Naive thymus-derived CD4-positive, alpha-beta T cell (primary cell): ENCODE measurements at regions of chr20 and their contacts with region 1.

Region 1: GRCh38 chr20:36835453-36836198 is 40.3 kb upstream of the TLDC2 start:
- DNase-seq: peak; percentile 56 to 85 (median 72)
- ATAC-seq: peak; percentile 99
- H3K4me3 ChIP-seq: peak overlapping the region; percentile 63
- H3K4me3 Mint-ChIP-seq: peak overlapping the region; percentile 71 to 92 (median 82)
- H3K27ac ChIP-seq: peak overlapping the region; percentile 54
- H3K27ac Mint-ChIP-seq: peak overlapping the region in 4 of 9 donors; percentile 75 to 92 (median 82)
- H3K4me1 ChIP-seq: peaks cover 5 to 9% of the 10 kb centered on the region in 2 donors
- H3K4me1 Mint-ChIP-seq: peaks cover 5 to 32% (median 10%) of the 10 kb centered on the region in 7 donors
- H3K27me3 ChIP-seq: no peaks in the 10 kb centered on the region
- H3K27me3 Mint-ChIP-seq: no peaks in the 10 kb centered on the region

Region 2: DNA sequence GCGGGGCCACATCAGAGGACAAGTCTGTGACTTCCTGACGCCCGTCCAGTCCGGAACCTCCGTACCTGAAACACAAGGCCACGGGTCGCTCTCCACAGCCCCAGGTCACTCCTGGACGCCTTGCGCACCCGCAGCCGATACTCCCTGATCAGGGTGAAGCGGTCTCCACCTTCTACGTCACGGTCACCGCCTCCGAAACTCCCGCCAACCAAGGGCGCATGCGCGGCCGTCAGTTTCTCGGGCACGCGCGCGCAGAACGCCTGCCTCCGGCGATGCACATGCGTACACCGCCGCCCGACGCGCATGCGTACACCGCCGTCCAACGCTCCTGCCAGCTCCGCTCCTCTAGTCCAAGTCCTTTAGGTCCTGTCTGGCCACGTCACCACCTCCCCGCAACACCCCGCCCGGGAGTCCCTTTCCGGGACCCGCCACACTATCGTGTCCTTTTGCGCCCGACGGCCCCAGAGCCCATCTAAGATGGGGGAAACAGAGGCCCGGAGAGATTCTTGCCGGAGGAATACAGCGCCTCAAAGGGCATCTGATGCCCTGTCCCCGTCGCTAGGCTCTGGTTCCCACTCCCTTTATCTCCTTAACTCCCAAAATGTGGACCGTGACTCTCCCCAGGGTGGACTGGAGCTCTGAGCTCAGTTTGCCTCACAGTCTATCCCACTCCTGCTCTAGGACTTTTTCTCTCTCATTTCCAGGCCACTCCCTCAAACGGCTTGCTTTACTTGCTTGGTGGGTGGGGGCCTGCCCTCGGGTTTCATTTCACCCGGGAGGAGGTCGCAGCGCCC is 61.8 kb before region 1 on chr20 and contains the start of gene DSN1:
- CTCF ChIA-PET with region 1: no interaction called
- POLR2A ChIA-PET with region 1: no interaction called
- intact Hi-C with region 1: loop called (anchors 2 kb)
- DNase-seq: peak; percentile 94 to 100 (median 97)
- ATAC-seq: peak; percentile 90
- H3K4me3 ChIP-seq: peak within 1 kb of the TSS; percentile 96
- H3K4me3 Mint-ChIP-seq: peak within 1 kb of the TSS; percentile 83 to 98 (median 95)
- H3K27ac ChIP-seq: peak within 1 kb of the TSS; percentile 93
- H3K27ac Mint-ChIP-seq: peak within 1 kb of the TSS; percentile 90 to 100 (median 97)
- H3K4me1 ChIP-seq: peaks cover 8 to 13% of the 10 kb centered on the region in 2 donors
- H3K4me1 Mint-ChIP-seq: peaks cover 8 to 36% (median 27%) of the 10 kb centered on the region in 7 donors
- H3K27me3 ChIP-seq: no peaks in the 10 kb centered on the region
- H3K27me3 Mint-ChIP-seq: peaks cover 0 to 2% (median 0%) of the 10 kb centered on the region in 5 donors
- total RNA-seq, gene DSN1: 9.2 to 27.5 (median 13.4) TPM

Region 3: DNA sequence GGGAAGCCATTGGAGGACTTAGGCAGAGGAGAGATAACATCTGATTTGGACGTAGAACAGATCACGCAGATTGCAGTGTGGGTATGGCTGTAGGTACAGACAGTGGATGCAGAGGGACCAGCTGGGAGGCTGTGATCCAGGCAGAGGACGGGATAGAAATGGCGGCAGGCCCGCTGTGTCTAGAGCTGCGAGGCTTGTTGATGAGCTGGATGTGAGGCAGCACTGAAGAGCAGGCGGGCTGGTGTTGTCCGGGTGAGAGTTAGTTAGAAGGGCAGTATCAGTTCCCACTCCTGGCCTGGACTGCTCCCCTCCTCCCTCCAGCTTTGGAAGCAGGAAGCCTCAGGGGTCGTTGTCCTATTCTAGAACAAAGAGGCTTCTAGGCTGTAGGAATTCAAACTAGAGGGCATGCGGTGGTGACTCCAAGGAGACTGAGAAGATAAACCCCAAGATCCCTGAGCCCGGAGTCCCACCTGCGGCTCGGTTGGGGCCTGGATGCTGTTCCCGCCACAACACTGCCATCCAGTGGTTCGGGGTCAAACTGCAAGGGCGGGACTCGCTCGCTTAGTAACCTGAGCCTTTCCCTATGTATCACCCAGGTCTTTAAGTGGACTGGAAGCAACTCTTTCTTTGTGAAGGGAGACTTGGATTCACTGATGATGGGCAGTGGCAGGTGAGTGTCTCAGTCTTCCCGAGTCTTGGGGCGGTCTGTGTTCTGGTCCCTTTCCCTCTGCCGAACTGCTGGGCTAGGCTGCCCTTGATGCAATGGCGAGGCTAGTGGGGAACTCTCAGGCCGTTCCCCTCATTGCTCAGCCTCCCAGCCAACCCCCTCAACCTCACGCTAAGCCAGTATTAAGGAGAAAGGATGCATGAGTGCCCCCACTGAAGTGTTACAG is 51.5 kb after region 1 on chr20:
- CTCF ChIA-PET with region 1: interaction called, 4 read pairs
- POLR2A ChIA-PET with region 1: no interaction called
- intact Hi-C with region 1: loop called in 1 of 2 experiments (anchors 2 kb)
- DNase-seq: peak; percentile 59 to 84 (median 75)
- ATAC-seq: peak; percentile 94
- H3K4me3 ChIP-seq: no peak overlapping the region
- H3K4me3 Mint-ChIP-seq: peak overlapping the region in 7 of 10 donors; percentile 10 to 62 (median 36)
- H3K27ac ChIP-seq: peak overlapping the region; percentile 33
- H3K27ac Mint-ChIP-seq: peak overlapping the region; percentile 2 to 89 (median 73)
- H3K4me1 ChIP-seq: peaks cover 5 to 7% of the 10 kb centered on the region in 2 donors
- H3K4me1 Mint-ChIP-seq: peaks cover 4 to 22% (median 16%) of the 10 kb centered on the region in 7 donors
- H3K27me3 ChIP-seq: no peaks in the 10 kb centered on the region
- H3K27me3 Mint-ChIP-seq: no peaks in the 10 kb centered on the region